CD8-positive, alpha-beta T cell (primary cell): ENCODE measurements at regions of chr11 and their contacts with region 1.

Region 1: GRCh38 chr11:67271541-67272284 is 5.4 kb downstream of the GRK2 start:
- DNase-seq: peak in 6 of 9 experiments; percentile 52 to 88 (median 68)
- ATAC-seq: peak; percentile 16
- H3K4me3 ChIP-seq: peak overlapping the region; percentile 85 to 87
- H3K4me3 Mint-ChIP-seq: peak overlapping the region; percentile 94
- H3K27ac ChIP-seq: peak overlapping the region; percentile 58 to 76
- H3K27ac Mint-ChIP-seq: peak overlapping the region; percentile 95
- H3K4me1 ChIP-seq: peaks cover 86% of the 10 kb centered on the region
- H3K4me1 Mint-ChIP-seq: peaks cover 83% of the 10 kb centered on the region
- H3K27me3 ChIP-seq: no peaks in the 10 kb centered on the region
- H3K27me3 Mint-ChIP-seq: no peaks in the 10 kb centered on the region
- CTCF ChIP-seq: no peak

Region 2: DNA sequence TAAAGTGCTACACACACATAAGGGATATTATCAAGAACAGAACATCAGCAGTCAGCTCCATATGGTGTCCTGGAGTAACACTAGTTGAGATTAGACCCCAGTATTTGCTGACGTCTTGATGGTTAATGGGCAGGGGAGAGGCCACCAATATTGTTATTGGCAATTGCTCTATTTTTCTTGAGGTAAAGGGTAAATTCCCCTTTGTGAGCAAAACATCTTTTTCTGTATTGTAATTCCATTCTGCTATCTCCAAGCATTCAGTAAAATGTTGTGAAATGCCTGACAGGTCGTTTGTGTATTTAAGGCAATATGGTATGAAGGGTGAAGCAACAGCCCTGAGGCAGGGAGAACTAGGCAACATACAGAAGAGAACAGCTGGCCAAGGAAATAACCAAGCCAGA is 335.4 kb before region 1 on chr11:
- CTCF ChIA-PET with region 1: no interaction called
- POLR2A ChIA-PET with region 1: no interaction called
- intact Hi-C with region 1: no loop called
- DNase-seq: no peak
- ATAC-seq: no peak
- H3K4me3 ChIP-seq: no peak overlapping the region
- H3K4me3 Mint-ChIP-seq: no peak overlapping the region
- H3K27ac ChIP-seq: no peak overlapping the region
- H3K27ac Mint-ChIP-seq: no peak overlapping the region
- H3K4me1 ChIP-seq: no peaks in the 10 kb centered on the region
- H3K4me1 Mint-ChIP-seq: no peaks in the 10 kb centered on the region
- H3K27me3 ChIP-seq: no peaks in the 10 kb centered on the region
- H3K27me3 Mint-ChIP-seq: no peaks in the 10 kb centered on the region
- CTCF ChIP-seq: no peak

Region 3: DNA sequence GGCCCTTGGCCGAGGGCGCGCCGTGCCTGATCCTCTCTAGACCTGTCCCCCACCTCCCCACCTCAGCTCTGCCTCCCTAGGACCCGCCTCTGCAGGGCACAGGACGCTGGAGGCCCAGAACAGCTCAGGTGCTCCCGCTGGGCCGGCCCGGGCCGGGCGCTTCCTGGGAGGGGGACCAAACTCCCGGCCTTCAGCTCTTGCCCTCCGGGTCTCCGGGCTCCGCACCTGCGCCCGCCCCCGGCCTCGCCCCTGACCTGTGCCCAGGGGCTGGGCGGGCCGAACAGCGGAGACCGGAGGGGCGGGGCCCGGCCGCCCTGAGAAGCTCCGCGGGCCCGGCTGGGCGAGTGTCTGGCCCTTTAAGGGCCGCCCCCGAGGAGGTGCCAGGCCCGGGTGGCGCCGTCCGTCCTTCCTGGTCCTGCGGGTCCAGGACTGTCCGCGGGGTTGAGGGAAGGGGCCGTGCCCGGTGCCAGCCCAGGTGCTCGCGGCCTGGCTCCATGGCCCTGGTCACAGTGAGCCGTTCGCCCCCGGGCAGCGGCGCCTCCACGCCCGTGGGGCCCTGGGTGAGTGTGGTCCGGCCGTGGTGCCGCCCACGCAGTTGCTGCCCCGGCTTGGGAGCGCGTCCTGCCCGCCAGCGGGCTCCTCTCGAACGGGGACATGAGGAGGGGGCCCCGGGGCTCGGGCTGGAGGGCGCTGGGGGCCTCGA is 31.6 kb after region 1 on chr11 and contains the start of gene SSH3:
- CTCF ChIA-PET with region 1: interaction called, 5 read pairs
- POLR2A ChIA-PET with region 1: interaction called, 19 read pairs
- intact Hi-C with region 1: no loop called
- DNase-seq: peak in 8 of 9 experiments; percentile 19 to 72 (median 48)
- ATAC-seq: peak; percentile 72
- H3K4me3 ChIP-seq: peak within 1 kb of the TSS; percentile 61 to 63
- H3K4me3 Mint-ChIP-seq: peak within 1 kb of the TSS; percentile 72
- H3K27ac ChIP-seq: peak within 1 kb of the TSS; percentile 32 to 37
- H3K27ac Mint-ChIP-seq: peak within 1 kb of the TSS; percentile 72
- H3K4me1 ChIP-seq: peaks cover 20% of the 10 kb centered on the region
- H3K4me1 Mint-ChIP-seq: peaks cover 16% of the 10 kb centered on the region
- H3K27me3 ChIP-seq: no peaks in the 10 kb centered on the region
- H3K27me3 Mint-ChIP-seq: no peaks in the 10 kb centered on the region
- CTCF ChIP-seq: no peak
- total RNA-seq, gene SSH3: 5.9 to 9.9 TPM